Common myeloid progenitor, CD34-positive (primary cell): ENCODE measurements at regions of chr3 and their contacts with region 1.

Region 1: GRCh38 chr3:194333212-194333980 is 17.7 kb downstream of the CPN2 start:
- DNase-seq: peak; percentile 83 to 88 (median 87)
- H3K4me3 ChIP-seq: peak overlapping the region in 6 of 7 experiments; percentile 43 to 73 (median 62)
- H3K27ac ChIP-seq: no peak overlapping the region
- H3K4me1 ChIP-seq: peaks cover 0 to 6% (median 6%) of the 10 kb centered on the region in 4 experiments
- H3K27me3 ChIP-seq: peaks cover 0 to 25% (median 10%) of the 10 kb centered on the region in 5 experiments

Region 2: DNA sequence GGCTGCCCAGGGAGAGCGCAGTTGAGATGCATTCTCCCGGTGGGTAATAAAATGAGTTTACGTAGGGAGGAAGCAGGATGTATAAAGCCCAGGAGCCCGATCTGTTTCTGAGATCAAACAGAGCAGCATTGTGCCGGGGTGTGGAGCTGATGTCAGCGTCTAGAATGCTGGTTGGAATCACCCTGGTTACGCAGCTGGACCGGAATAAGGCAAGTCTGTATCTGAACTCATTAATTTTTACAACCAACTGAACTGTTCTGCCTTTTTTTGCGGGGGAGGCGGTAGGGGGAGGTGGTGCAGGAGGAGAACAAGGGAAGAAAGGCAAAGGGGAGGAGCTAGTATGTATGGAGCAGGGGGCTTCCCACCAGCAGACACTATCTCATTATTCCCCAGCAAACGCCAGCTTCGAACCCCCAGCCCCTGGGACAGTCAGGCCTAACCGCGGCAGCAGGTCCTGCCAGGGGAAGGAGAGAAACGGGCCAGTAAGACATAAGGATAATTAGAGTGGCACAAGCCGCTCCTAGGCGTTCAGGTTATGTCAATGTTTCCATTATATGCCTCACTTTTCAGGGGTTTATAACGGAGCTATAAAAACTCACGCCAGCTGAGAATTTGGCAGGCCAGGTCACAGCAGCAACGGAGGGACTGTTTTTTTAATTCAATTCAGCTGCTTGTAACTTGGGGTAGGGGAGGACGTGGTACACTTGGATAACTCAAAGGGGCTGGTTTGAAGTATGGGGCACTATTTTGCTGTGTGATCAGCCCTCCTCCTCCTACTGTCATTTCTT is 372.7 kb before region 1 on chr3:
- CTCF ChIA-PET with region 1: no interaction called
- POLR2A ChIA-PET with region 1: no interaction called
- DNase-seq: no peak
- H3K4me3 ChIP-seq: no peak overlapping the region
- H3K27ac ChIP-seq: no peak overlapping the region
- H3K4me1 ChIP-seq: peaks cover 0 to 3% (median 0%) of the 10 kb centered on the region in 4 experiments
- H3K27me3 ChIP-seq: peaks cover 0 to 69% (median 18%) of the 10 kb centered on the region in 5 experiments

Region 3: GRCh38 chr3:194344012-194344411 is 10.6 kb after region 1 on chr3:
- CTCF ChIA-PET with region 1: interaction called, 105 read pairs
- POLR2A ChIA-PET with region 1: no interaction called
- DNase-seq: peak; percentile 59 to 79 (median 73)
- H3K4me3 ChIP-seq: no peak overlapping the region
- H3K27ac ChIP-seq: no peak overlapping the region
- H3K4me1 ChIP-seq: no peaks in the 10 kb centered on the region
- H3K27me3 ChIP-seq: peaks cover 0 to 7% (median 3%) of the 10 kb centered on the region in 5 experiments

Region 4: DNA sequence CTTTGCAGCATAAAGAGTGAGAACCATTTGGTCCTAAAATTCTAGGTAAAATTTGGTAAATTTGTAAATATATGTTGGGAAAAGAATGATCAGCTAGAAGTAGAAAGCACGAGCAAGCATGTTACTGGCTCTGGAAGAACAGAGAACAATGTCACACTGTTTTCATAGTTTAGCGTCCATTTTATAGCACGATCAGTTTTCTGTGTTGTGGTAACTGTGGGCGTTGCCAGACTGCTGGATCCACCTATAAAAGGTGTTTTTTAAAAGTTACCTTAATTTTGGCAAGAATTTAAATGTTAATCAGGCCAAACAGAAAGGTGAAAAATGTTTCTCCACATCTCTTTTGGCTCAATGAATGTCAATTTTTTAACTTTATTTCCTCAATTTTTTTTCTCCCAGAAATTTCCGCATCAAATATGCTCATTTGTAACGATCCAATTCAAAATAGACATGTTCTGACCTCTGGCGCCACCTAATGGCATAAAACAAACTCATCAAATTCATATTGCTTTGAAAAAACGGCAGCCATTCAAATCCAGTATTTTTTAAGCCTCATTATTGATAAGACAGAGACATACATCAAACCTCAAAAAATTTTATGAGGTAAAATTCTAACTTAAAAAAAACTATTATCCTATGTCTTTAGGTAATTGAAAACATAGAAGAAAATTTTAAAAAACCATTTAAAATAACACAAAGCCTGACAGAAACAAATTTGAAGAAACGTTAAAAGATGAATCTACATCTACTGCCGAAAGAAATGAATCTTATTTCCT is 71.2 kb after region 1 on chr3:
- CTCF ChIA-PET with region 1: interaction called, 349 read pairs
- POLR2A ChIA-PET with region 1: no interaction called
- DNase-seq: peak; percentile 60 to 76 (median 67)
- H3K4me3 ChIP-seq: no peak overlapping the region
- H3K27ac ChIP-seq: no peak overlapping the region
- H3K4me1 ChIP-seq: peaks cover under 1 to 7% (median 6%) of the 10 kb centered on the region in 4 experiments
- H3K27me3 ChIP-seq: peaks cover 0 to 7% (median 0%) of the 10 kb centered on the region in 5 experiments